Endothelial cell of umbilical vein (primary cell): ENCODE measurements at regions of chr5 and their contacts with region 1.

Region 1: GRCh38 chr5:151771259-151772028 is at the start of gene G3BP1:
- DNase-seq: peak; percentile 100
- H3K4me3 ChIP-seq: peak within 1 kb of the TSS; percentile 62 to 85 (median 65)
- H3K27ac ChIP-seq: peak within 1 kb of the TSS; percentile 75
- H3K4me1 ChIP-seq: peaks cover 32% of the 10 kb centered on the region
- H3K27me3 ChIP-seq: no peaks in the 10 kb centered on the region
- CTCF ChIP-seq: peak; percentile 74
- POLR2A ChIP-seq: peak; percentile 96
- total RNA-seq, gene G3BP1: 255 and 262 TPM in 2 replicates

Region 2: GRCh38 chr5:151570512-151571376 is 200.7 kb before region 1 on chr5:
- CTCF ChIA-PET with region 1: no interaction called
- POLR2A ChIA-PET with region 1: no interaction called
- dilution Hi-C with region 1: no loop called
- intact Hi-C with region 1: no loop called
- DNase-seq: no peak
- H3K4me3 ChIP-seq: no peak overlapping the region
- H3K27ac ChIP-seq: no peak overlapping the region
- H3K4me1 ChIP-seq: no peaks in the 10 kb centered on the region
- H3K27me3 ChIP-seq: no peaks in the 10 kb centered on the region
- CTCF ChIP-seq: no peak
- POLR2A ChIP-seq: no peak

Region 3: GRCh38 chr5:151659001-151659754 is 112.3 kb before region 1 on chr5:
- CTCF ChIA-PET with region 1: interaction called, 23 read pairs
- POLR2A ChIA-PET with region 1: interaction called, 7 read pairs
- dilution Hi-C with region 1: no loop called
- intact Hi-C with region 1: loop called (anchors 1 kb)
- DNase-seq: peak; percentile 84
- H3K4me3 ChIP-seq: no peak overlapping the region
- H3K27ac ChIP-seq: no peak overlapping the region
- H3K4me1 ChIP-seq: peaks cover 16% of the 10 kb centered on the region
- H3K27me3 ChIP-seq: no peaks in the 10 kb centered on the region
- CTCF ChIP-seq: peak; percentile 85 to 92
- POLR2A ChIP-seq: peak; percentile 49

Region 4: DNA sequence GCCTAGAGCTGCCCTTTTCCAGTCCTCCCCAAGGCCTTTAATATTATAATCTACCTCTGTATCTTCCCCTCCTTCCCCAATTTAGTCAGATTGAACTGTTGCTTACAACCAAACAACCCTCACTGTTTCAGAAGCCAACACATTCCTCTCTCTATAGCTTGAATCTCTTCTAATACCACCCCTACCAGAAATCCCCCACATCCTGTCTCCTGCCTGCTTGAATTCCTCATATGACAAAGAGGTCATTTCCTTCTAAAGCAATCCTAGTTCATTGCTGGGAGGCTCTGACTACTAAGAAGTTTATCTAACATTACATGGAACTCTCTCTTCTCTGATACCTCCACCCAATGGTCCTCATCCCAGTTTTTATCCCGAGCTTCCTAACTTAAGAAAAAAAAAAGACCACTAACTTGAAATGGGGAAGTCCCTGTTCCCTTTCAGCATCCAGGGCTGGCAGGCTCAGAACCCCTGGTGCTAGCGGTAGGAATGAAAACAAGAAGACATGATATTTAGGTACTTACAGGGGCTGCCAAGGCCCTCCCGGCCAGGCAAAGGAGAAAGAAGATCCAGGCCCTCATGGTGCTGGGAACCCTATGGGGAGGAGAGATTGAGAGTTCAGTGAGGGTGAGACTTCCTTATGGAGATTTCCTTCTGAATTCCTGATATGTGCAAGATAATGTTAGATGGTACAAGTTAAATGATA is 95.7 kb before region 1 on chr5:
- CTCF ChIA-PET with region 1: interaction called, 10 read pairs
- POLR2A ChIA-PET with region 1: interaction called, 7 read pairs
- dilution Hi-C with region 1: no loop called
- intact Hi-C with region 1: loop called (anchors 2 kb)
- DNase-seq: peak; percentile 87
- H3K4me3 ChIP-seq: peak overlapping the region in 1 of 3 experiments; percentile 16
- H3K27ac ChIP-seq: peak overlapping the region; percentile 99
- H3K4me1 ChIP-seq: peaks cover 98% of the 10 kb centered on the region
- H3K27me3 ChIP-seq: no peaks in the 10 kb centered on the region
- CTCF ChIP-seq: no peak
- POLR2A ChIP-seq: no peak

Region 5: GRCh38 chr5:151699071-151699901 is 72.2 kb before region 1 on chr5:
- CTCF ChIA-PET with region 1: interaction called, 3 read pairs
- POLR2A ChIA-PET with region 1: no interaction called
- dilution Hi-C with region 1: no loop called
- intact Hi-C with region 1: loop called (anchors 1 kb)
- DNase-seq: peak; percentile 94
- H3K4me3 ChIP-seq: no peak overlapping the region
- H3K27ac ChIP-seq: peak overlapping the region; percentile 93
- H3K4me1 ChIP-seq: peaks cover 12% of the 10 kb centered on the region
- H3K27me3 ChIP-seq: no peaks in the 10 kb centered on the region
- CTCF ChIP-seq: no peak
- POLR2A ChIP-seq: peak; percentile 62

Region 6: GRCh38 chr5:151758430-151759241 is 12.8 kb before region 1 on chr5 and contains the start of gene ATOX1:
- CTCF ChIA-PET with region 1: interaction called, 25 read pairs
- POLR2A ChIA-PET with region 1: interaction called, 12 read pairs
- dilution Hi-C with region 1: no loop called
- intact Hi-C with region 1: loop called (anchors 1 kb)
- DNase-seq: peak; percentile 94
- H3K4me3 ChIP-seq: peak within 1 kb of the TSS; percentile 59 to 86 (median 68)
- H3K27ac ChIP-seq: peak within 1 kb of the TSS; percentile 76
- H3K4me1 ChIP-seq: peaks cover 18% of the 10 kb centered on the region
- H3K27me3 ChIP-seq: no peaks in the 10 kb centered on the region
- CTCF ChIP-seq: peak in 1 of 2 donors; percentile 7
- POLR2A ChIP-seq: peak; percentile 96
- total RNA-seq, gene ATOX1: 113 and 130 TPM in 2 replicates

Region 7: DNA sequence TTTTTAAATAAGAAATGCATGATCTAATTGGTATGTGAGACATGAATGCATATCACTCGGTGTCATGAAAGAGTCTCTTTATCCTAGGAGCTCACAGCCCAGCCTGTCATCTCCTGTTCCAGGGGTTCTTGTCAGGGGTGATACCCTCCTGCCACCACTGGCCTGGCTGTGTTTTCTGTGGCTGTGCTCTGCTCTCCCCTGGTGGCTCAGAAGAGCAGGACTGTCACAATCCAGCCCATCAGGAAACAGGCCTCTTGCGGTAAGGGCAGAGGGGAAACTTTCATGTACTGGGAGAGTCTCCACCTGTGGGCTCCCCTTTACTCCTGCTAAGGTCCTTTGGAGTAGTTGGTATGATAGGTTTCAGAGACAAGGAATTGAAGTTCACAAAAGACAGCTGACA is 393.4 kb after region 1 on chr5:
- CTCF ChIA-PET with region 1: no interaction called
- POLR2A ChIA-PET with region 1: no interaction called
- dilution Hi-C with region 1: no loop called
- intact Hi-C with region 1: no loop called
- DNase-seq: no peak
- H3K4me3 ChIP-seq: no peak overlapping the region
- H3K27ac ChIP-seq: no peak overlapping the region
- H3K4me1 ChIP-seq: no peaks in the 10 kb centered on the region
- H3K27me3 ChIP-seq: no peaks in the 10 kb centered on the region
- CTCF ChIP-seq: no peak
- POLR2A ChIP-seq: no peak